ENCODE measurements at regions of chr12 and their contacts with region 1.

Region 1: DNA sequence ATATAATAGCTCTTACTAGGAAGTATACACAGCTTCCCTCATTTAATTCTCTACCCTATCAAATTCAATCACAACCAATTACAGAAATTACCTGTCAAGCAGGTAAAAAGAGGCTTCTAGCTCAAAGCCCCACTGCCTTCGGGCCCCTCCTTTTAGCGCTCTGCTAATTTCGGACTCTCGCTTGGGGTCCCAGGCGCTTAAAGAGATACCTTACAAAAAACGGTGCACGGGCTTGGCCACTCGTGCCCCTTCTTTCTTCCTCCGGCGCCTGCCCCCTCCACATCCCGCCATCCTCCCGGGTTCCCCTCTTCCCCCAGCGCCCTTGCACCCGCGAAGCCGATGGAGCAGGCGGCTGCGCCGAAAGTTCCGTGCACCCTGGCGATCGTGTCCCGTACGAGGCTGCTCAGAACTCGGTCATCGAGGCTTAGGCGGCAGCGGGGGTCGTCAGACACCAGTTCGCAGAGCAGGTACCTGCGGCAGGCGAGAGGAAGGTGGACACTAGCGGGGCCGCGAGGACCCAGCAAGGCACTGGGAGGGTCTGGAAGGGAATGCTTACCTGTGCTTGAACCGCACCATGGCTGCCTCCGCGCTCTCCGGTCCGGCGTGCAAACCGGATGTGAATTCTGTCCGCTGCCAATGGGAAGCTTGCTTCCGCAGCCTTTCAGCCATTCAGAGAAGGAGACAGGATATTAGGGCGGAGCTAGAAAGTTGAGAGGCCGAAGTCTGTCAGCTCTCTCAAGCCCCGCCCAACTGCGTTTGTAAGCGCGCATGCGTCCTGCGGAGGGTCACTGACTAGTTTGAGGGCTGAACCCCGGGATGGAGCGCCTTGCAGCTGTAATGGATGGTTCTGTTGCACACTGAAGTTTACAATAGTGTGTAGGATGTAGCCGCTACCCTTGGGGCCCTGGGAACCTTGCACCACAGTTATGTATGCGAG is at the start of gene POP5:
- DNase-seq: peak; percentile 96
- ATAC-seq: peak; percentile 94
- total RNA-seq, gene POP5: 27.9 to 34.3 TPM

Region 2: DNA sequence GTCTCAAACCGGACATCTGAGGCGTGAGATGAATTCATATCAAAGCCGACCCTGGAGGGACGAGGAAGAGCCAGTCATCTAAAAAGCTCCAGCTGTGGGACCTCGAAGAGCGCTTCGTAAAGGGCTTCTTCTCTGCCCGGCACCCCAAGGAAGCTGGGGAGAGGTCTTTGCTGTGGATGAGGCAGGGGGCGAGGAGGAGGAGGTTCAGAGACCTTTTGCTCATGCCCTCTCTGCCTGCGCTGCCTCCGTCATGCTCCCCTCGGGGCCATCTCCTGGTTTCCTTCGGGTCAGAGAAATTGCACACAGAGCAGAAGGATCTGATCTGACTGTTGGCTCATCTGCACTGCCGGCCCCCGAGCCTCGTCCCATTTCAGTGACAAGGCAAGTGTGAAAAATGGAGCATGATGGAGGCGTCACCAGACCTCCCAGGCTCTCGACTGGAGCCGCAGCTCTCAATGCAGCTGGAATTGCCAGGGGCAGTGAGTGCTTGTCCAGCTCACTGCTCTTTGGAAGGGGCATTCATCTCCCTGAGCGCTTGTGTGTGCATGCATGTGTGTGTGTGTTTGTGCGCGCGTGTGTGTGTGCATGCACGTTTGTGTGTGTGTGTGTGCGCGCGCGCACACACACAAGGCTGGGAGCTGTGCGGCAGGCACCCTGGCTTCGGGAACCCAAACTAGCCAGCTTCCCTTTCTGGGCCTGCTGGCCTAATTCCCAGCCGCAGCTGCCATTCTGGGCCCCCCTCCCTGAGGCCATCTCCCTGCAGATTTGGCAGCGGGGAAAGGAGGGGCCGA is 68.6 kb after region 1 on chr12:
- intact Hi-C with region 1: loop called (anchors 2 to 5 kb)
- DNase-seq: no peak
- ATAC-seq: peak in 1 of 2 donors; percentile 25

Region 3: GRCh38 chr12:120688527-120689071 is 107.5 kb after region 1 on chr12:
- intact Hi-C with region 1: no loop called
- DNase-seq: no peak
- ATAC-seq: no peak

Region 4: DNA sequence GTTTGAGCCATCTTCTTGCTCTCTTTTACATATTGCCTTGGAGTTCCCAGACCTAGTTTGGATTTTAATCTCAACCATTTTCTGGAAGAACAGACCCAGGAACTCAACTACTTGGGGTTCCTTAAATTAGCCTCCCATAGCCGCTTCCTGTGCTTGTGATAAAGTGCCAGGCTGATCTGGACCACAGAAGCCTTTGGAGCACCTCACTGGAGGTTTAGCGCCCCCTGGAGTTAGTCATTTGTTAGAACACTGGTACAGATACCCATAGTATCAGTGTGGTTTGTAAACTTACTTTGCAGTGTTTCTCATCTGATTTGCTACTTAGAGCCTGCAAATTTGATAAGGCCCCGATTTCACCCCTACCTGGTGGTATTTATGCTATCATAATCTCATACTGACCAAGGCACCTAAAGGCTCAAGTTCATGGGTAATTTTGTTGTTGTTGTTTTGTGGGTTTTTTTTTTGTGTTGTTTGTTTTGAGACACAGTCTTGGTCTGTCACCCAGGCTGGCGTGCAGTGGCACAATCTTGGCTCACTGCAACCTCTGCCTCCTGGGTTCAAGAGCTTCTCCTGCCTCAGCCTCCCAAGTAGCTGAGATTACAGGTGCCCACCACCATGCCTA is 132.9 kb after region 1 on chr12:
- intact Hi-C with region 1: loop called (anchors 2 to 5 kb)
- DNase-seq: peak; percentile 65
- ATAC-seq: peak; percentile 55 to 59

Region 5: GRCh38 chr12:120719496-120720233 is 138.6 kb after region 1 on chr12:
- intact Hi-C with region 1: loop called (anchors 2 to 5 kb)
- DNase-seq: no peak
- ATAC-seq: no peak

Region 6: DNA sequence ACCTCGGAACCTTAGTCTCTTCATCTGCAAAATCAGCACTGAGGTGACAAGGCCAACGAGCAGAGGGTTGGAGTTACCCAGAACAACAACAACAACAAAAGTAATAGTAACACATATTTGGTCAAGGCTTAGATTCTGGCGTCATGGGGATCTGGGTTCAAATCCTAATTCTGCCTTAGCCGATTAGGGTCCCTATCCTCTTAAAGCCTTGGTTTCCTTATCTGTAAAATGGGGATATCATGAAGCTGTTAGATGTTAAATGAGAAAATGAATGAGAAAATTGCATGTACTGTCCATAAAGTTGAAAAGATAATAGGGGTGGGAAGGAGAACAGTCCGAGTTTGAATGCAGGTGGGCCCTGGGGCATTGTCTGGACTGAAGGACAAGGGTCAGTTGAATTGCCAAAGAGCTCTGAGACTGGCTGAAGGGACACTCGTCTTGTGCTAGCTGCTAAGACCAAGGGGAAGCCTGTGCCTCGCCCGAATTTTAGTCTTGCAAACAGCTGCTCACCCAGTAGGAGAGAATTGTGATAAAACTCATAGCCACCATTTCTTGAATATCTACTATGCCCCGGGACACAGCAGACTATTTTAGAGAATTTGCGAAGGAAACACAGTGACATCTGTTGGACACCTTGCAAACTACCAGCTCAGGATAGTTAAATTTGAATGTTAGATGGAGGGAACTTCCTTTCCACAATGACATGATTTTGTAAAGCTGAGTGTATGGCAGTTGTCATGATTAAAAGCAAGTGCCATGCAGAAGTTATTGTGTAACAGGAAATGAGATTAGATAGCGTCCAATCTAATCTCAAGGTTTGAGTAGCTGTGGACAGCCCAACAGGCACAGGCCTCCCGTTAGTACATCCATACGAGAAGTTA is 390.5 kb after region 1 on chr12:
- intact Hi-C with region 1: loop called in 1 of 2 experiments (anchors 5 kb)
- DNase-seq: no peak
- ATAC-seq: peak; percentile 84 to 88

Region 7: DNA sequence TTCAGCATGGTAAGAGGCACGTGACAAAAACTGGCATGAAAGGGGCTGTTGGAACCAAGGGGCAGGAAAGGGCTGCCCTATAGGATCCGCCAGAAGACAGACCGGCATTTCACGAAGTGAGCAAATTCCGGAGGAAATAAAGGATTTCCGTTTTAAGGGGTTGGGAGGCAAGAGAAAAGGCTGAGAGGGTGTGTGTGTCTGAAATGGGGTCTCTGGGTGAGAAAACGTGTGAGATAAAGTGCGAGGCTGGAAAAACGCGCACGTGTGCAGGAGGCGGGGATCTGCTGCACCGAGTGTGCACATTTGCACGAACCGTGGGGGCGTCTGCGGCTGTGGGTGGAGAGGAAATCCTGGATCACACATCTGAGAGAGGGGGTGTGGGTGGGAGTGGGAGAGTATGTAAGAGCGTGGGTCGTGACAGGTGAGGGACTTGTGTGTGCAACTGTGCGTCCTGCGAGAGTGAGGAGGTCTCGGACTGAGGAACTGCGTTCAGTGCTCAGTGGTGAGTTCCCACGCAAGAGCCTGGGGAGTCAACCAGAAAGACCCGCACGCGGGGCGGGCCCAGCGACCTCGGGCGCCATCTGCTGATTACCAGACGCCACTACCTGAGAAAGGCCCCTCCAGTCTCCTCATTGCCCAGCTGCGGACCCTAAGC is 514.6 kb after region 1 on chr12:
- intact Hi-C with region 1: loop called in 1 of 2 experiments (anchors 10 kb)
- DNase-seq: peak; percentile 76
- ATAC-seq: peak; percentile 92 to 96

Region 8: GRCh38 chr12:121255433-121255832 is 674.4 kb after region 1 on chr12:
- intact Hi-C with region 1: no loop called
- DNase-seq: no peak
- ATAC-seq: no peak